ENCODE measurements at regions of chr1 and their contacts with region 1.

Region 1: GRCh38 chr1:117895482-117896114 is 33.8 kb downstream of the GDAP2 start:
- DNase-seq: peak; percentile 8 to 72 (median 38)
- ATAC-seq: peak; percentile 41
- H3K4me3 ChIP-seq: no peak overlapping the region
- H3K4me3 Mint-ChIP-seq: no peak overlapping the region
- H3K27ac ChIP-seq: no peak overlapping the region
- H3K27ac Mint-ChIP-seq: no peak overlapping the region
- H3K4me1 ChIP-seq: no peaks in the 10 kb centered on the region
- H3K4me1 Mint-ChIP-seq: no peaks in the 10 kb centered on the region
- H3K27me3 ChIP-seq: no peaks in the 10 kb centered on the region
- H3K27me3 Mint-ChIP-seq: no peaks in the 10 kb centered on the region
- CTCF ChIP-seq: peak; percentile 91

Region 2: GRCh38 chr1:117067533-117068370 is 827.8 kb before region 1 on chr1:
- CTCF ChIA-PET with region 1: interaction called, 7 read pairs
- POLR2A ChIA-PET with region 1: no interaction called
- intact Hi-C with region 1: loop called (anchors 5 to 10 kb)
- DNase-seq: peak in 8 of 14 experiments; percentile 7 to 68 (median 38)
- ATAC-seq: peak; percentile 79
- H3K4me3 ChIP-seq: no peak overlapping the region
- H3K4me3 Mint-ChIP-seq: no peak overlapping the region
- H3K27ac ChIP-seq: no peak overlapping the region
- H3K27ac Mint-ChIP-seq: no peak overlapping the region
- H3K4me1 ChIP-seq: no peaks in the 10 kb centered on the region
- H3K4me1 Mint-ChIP-seq: peaks cover 25% of the 10 kb centered on the region
- H3K27me3 ChIP-seq: no peaks in the 10 kb centered on the region
- H3K27me3 Mint-ChIP-seq: no peaks in the 10 kb centered on the region
- CTCF ChIP-seq: peak; percentile 62

Region 3: GRCh38 chr1:117512743-117513321 is 382.8 kb before region 1 on chr1:
- CTCF ChIA-PET with region 1: interaction called, 5 read pairs
- POLR2A ChIA-PET with region 1: no interaction called
- intact Hi-C with region 1: loop called (anchors 1 to 5 kb)
- DNase-seq: peak in 3 of 14 experiments; percentile 40 to 52 (median 42)
- ATAC-seq: no peak
- H3K4me3 ChIP-seq: no peak overlapping the region
- H3K4me3 Mint-ChIP-seq: no peak overlapping the region
- H3K27ac ChIP-seq: no peak overlapping the region
- H3K27ac Mint-ChIP-seq: no peak overlapping the region
- H3K4me1 ChIP-seq: no peaks in the 10 kb centered on the region
- H3K4me1 Mint-ChIP-seq: no peaks in the 10 kb centered on the region
- H3K27me3 ChIP-seq: no peaks in the 10 kb centered on the region
- H3K27me3 Mint-ChIP-seq: no peaks in the 10 kb centered on the region
- CTCF ChIP-seq: peak; percentile 60

Region 4: DNA sequence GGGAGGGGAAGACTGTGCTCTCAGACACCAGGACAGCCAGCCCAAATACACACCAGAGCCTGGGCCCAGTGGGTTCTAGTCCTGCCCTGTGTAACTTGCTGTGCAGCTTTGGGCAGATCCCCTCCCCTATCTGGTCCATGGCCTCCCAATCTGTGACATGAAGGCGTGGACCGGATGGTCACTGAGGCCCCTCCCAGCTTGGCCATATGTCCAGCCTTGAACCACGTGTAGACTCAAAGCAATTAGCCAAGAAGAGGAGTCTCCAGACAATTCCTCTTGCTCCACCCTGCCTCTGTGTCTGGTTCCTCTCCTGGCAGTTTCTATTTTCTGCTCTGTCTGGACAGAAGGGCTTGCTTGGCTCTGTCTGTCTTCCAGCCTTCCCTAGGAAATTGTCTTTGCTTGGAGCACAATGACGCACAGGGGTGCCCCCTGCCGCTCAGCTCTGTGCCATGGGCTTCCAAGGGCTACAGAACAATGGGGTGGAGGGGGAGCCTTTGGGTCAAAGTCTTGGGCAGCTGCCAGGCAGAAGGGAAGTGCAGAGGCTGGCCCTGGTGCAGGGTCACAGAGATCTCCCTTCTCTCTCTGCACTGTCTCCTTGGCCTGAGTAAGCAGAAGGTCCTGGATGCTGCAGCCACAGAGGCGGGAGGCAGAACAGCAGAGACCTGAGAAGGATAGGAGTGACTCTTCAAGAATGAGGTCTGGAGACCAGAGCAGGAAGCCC is 223.7 kb before region 1 on chr1:
- CTCF ChIA-PET with region 1: no interaction called
- POLR2A ChIA-PET with region 1: no interaction called
- intact Hi-C with region 1: no loop called
- DNase-seq: peak in 2 of 14 experiments; percentile 18 to 32
- ATAC-seq: no peak
- H3K4me3 ChIP-seq: no peak overlapping the region
- H3K4me3 Mint-ChIP-seq: no peak overlapping the region
- H3K27ac ChIP-seq: no peak overlapping the region
- H3K27ac Mint-ChIP-seq: no peak overlapping the region
- H3K4me1 ChIP-seq: peaks cover 18% of the 10 kb centered on the region
- H3K4me1 Mint-ChIP-seq: peaks cover 12% of the 10 kb centered on the region
- H3K27me3 ChIP-seq: no peaks in the 10 kb centered on the region
- H3K27me3 Mint-ChIP-seq: peaks cover 13% of the 10 kb centered on the region
- CTCF ChIP-seq: no peak

Region 5: DNA sequence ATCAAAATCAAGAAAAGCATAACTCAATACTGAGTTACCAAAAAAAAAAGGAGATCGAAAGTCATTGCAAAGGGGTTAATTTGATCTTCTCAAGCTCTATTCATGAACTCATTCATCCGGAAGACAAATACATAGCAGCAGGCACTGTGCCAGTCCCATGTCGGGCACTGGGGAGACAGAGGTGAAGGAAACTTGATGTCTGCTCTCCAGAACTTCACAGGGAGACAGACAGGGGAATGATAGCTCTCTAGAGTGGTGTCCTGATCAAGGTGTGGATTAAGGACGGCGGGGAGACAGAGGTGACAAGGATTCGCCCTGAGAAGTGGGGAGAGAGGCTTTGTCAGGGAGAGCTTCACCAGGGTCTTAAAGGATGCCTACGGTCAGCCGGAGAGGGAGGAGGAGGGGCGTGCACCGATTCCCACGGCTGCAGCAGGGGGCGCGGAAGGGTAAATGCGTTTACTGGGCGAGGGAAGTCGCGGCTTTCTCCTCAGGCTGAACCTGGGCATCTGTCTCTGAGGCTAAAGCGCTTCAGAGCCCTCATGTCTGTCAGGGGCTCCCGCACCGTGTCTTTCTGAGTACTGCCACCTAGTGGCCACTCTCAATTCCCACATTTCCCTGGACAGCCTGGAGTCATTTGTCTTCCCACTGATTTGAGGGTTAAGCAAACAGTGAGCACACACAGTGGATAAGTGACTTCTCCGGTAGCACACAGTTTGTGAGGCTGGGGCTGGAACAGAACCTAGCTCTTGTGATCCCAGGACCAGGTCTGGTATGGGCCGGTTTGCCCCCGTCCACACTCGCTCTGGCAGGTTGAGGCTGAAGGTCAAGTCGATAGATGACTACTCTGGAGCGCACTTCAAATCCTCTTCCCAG is 136.9 kb before region 1 on chr1:
- CTCF ChIA-PET with region 1: no interaction called
- POLR2A ChIA-PET with region 1: no interaction called
- intact Hi-C with region 1: loop called in 1 of 2 experiments (anchors 10 kb)
- DNase-seq: peak; percentile 48 to 83 (median 56)
- ATAC-seq: peak; percentile 86
- H3K4me3 ChIP-seq: peak overlapping the region; percentile 52
- H3K4me3 Mint-ChIP-seq: peak overlapping the region; percentile 84
- H3K27ac ChIP-seq: no peak overlapping the region
- H3K27ac Mint-ChIP-seq: no peak overlapping the region
- H3K4me1 ChIP-seq: peaks cover 14% of the 10 kb centered on the region
- H3K4me1 Mint-ChIP-seq: peaks cover 10% of the 10 kb centered on the region
- H3K27me3 ChIP-seq: peaks cover 0 to 4% of the 10 kb centered on the region in 2 experiments
- H3K27me3 Mint-ChIP-seq: peaks cover 36% of the 10 kb centered on the region
- CTCF ChIP-seq: peak; percentile 95

Region 6: DNA sequence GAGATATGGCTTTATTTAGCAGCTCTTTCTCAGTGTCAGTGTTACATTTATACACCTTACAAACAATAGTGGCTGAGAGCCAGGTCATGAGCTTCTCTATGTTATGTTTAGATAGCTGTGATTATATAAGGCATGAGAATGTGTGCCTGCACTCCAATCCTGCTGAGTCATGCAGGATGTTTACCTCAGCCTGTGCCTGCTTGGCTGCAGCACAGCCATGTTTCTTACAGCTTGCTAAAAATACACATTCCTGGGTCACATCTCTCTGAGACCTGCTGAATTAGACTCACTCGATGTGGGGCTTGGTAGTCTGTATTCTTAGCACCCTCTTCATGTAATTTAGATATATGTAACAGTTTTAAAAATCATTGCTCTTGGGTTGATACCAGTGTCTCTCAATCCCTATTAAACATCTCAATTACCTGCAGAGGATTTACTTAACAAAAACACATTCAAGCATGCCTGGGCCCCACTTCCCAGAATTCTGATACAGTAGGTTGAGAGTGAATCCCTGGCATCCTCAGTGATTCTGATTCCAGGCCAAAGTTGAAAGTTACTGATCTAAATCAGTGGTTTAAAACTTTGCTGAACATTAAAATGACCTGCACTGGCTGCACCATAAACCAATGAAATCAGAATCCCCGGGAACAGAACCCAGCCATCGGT is 73.7 kb before region 1 on chr1:
- CTCF ChIA-PET with region 1: no interaction called
- POLR2A ChIA-PET with region 1: no interaction called
- intact Hi-C with region 1: no loop called
- DNase-seq: no peak
- ATAC-seq: no peak
- H3K4me3 ChIP-seq: no peak overlapping the region
- H3K4me3 Mint-ChIP-seq: no peak overlapping the region
- H3K27ac ChIP-seq: no peak overlapping the region
- H3K27ac Mint-ChIP-seq: no peak overlapping the region
- H3K4me1 ChIP-seq: no peaks in the 10 kb centered on the region
- H3K4me1 Mint-ChIP-seq: no peaks in the 10 kb centered on the region
- H3K27me3 ChIP-seq: peaks cover 0 to 2% of the 10 kb centered on the region in 2 experiments
- H3K27me3 Mint-ChIP-seq: peaks cover 14% of the 10 kb centered on the region
- CTCF ChIP-seq: no peak

Region 7: DNA sequence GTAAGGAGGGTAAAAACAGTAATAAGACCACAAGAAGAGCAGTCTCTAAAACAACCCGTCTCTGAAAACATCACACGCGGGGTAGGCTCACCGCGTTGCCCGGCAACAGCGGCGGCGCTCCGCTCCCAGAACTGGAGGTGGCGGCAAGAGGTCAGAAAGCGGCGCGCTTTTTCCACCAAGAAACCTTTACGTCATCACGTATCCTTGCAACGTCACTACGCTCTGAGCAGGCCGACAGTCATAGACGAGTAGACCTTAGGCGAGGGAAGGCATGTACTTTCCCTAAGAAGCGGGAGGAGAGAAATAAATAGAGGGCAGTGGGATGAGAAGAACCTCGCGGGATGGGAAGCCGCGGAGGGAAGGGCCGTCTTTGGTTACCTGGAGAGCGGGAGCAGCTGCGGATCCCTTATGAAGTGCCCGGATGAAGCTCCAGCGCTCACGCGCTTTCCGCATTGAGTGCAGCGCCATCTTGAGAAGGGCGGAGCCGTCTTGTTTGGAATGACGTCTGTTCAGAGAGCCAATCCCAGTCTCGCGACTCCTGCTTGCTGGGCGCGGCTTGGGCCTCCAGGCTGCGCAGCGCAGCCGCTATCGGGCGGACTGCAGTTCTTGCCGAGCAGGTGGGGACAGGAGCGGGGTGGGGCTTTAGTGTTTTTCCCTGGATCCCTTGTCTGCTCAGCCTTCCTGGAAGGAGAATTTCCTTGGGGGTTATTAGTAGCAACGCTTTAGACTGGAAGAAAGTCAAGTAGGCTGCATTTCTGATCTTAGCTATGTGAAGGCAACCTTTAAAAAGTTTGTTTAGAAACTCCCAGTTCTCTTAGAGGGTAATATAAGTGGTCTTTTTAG is 1244.8 kb after region 1 on chr1 and contains the start of gene WARS2:
- CTCF ChIA-PET with region 1: no interaction called
- POLR2A ChIA-PET with region 1: no interaction called
- intact Hi-C with region 1: loop called in 1 of 2 experiments (anchors 10 kb)
- DNase-seq: peak; percentile 85 to 99 (median 89)
- ATAC-seq: peak; percentile 91
- H3K4me3 ChIP-seq: peak within 1 kb of the TSS; percentile 76
- H3K4me3 Mint-ChIP-seq: no peak within 1 kb of the TSS
- H3K27ac ChIP-seq: peak within 1 kb of the TSS; percentile 97 to 100
- H3K27ac Mint-ChIP-seq: no peak within 1 kb of the TSS
- H3K4me1 ChIP-seq: peaks cover 19% of the 10 kb centered on the region
- H3K4me1 Mint-ChIP-seq: peaks cover 18% of the 10 kb centered on the region
- H3K27me3 ChIP-seq: no peaks in the 10 kb centered on the region
- H3K27me3 Mint-ChIP-seq: no peaks in the 10 kb centered on the region
- CTCF ChIP-seq: no peak
- total RNA-seq, gene WARS2: 15.8 to 16.5 TPM

Measured in CD4-positive, alpha-beta T cell (primary cell).